ENCODE measurements at regions of chr10 and their contacts with region 1.

Region 1: GRCh38 chr10:103592186-103593021 is 98.9 kb downstream of the NEURL1 start:
- DNase-seq: peak; percentile 57
- H3K4me3 Mint-ChIP-seq: no peak overlapping the region
- H3K27ac Mint-ChIP-seq: no peak overlapping the region
- H3K4me1 Mint-ChIP-seq: no peaks in the 10 kb centered on the region
- H3K27me3 Mint-ChIP-seq: no peaks in the 10 kb centered on the region
- CTCF ChIP-seq: peak; percentile 76

Region 2: DNA sequence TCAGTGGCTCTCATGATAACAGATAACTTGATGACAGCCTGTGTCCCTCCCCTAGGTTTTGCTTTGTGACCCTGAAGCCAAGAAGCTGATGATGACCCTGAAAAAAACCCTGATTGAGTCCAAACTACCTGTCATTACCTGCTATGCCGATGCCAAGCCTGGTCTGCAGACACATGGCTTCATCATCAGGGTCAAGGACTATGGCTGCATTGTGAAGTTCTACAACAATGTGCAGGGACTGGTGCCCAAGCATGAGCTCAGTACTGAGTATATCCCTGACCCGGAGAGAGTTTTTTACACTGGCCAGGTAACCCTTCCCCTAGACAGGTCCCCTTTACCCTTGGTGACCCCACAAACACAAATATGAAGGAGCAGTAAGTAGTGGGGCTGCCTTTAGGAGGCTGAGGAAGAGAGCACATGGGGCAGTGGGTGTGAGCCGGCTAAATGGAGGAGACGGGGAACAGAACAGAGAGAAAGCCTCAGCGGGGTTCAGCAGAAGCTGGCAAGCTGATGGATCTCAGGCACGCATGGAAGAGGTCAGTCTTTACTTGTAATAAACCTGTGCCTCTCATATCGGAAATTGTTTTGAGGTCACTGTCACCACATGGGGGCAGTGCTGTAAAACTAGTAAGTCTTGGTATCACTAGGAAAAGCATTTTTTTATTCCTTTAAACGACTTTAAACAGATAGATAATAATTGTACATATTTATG is 175.8 kb before region 1 on chr10:
- CTCF ChIA-PET with region 1: no interaction called
- intact Hi-C with region 1: loop called (anchors 5 kb)
- DNase-seq: peak; percentile 43
- H3K4me3 Mint-ChIP-seq: no peak overlapping the region
- H3K27ac Mint-ChIP-seq: no peak overlapping the region
- H3K4me1 Mint-ChIP-seq: no peaks in the 10 kb centered on the region
- H3K27me3 Mint-ChIP-seq: no peaks in the 10 kb centered on the region
- CTCF ChIP-seq: peak; percentile 22

Region 3: DNA sequence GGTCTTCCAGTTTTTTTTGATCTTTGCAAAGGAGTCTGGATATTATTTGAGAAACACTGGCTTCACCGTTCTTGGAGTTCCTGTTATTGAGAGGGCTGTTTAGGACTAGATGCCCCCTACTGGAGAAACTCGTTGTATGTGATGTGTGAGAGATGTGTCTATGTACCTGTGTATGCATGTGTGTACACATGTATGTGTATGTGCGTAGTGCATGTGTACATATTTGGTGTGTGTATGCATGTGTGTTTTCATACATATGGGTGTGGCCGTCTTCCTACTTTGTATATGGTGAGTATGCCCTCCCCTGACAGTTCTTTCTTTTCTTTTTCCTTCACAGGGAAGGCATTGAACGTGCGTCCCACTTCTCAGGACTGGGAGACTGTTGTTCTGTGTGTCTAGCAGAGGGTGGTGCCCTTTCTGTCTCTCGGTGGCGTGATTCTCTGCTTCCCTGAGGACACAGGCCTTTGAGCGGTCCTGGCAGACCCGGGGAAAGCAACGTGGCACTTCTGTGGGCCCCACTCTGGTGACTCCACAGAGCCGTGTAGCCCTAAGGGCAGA is 110.4 kb before region 1 on chr10:
- CTCF ChIA-PET with region 1: no interaction called
- intact Hi-C with region 1: loop called (anchors 10 kb)
- DNase-seq: peak; percentile 36
- H3K4me3 Mint-ChIP-seq: no peak overlapping the region
- H3K27ac Mint-ChIP-seq: no peak overlapping the region
- H3K4me1 Mint-ChIP-seq: peaks cover 10% of the 10 kb centered on the region
- H3K27me3 Mint-ChIP-seq: no peaks in the 10 kb centered on the region
- CTCF ChIP-seq: peak; percentile 51

Measured in Calu3 (cell line).